ENCODE measurements at regions of chr20 and their contacts with region 1.

Region 1: GRCh38 chr20:38109591-38110524 is 55.2 kb downstream of the TGM2 start:
- DNase-seq: peak; percentile 88

Region 2: GRCh38 chr20:37901654-37902503 is 208.0 kb before region 1 on chr20:
- intact Hi-C with region 1: no loop called
- DNase-seq: no peak

Region 3: GRCh38 chr20:38073307-38074071 is 36.4 kb before region 1 on chr20:
- intact Hi-C with region 1: loop called (anchors 5 kb)
- DNase-seq: no peak

Region 4: GRCh38 chr20:38127011-38127621 is 17.3 kb after region 1 on chr20:
- intact Hi-C with region 1: loop called (anchors 1 kb)
- DNase-seq: peak; percentile 75

Measured in cardiac septum (tissue), 1 donor.